ENCODE measurements at regions of chr18 and their contacts with region 1.

Region 1: GRCh38 chr18:74242438-74243096 is 49.2 kb downstream of the CYB5A start:
- DNase-seq: peak; percentile 25 to 40
- H3K4me3 ChIP-seq: peak overlapping the region; percentile 23
- H3K4me3 Mint-ChIP-seq: peak overlapping the region; percentile 60
- H3K27ac Mint-ChIP-seq: no peak overlapping the region
- H3K4me1 ChIP-seq: peaks cover 11% of the 10 kb centered on the region; the same call in 1 of the 2 replicates
- H3K4me1 Mint-ChIP-seq: peaks cover 9% of the 10 kb centered on the region
- H3K27me3 ChIP-seq: no peaks in the 10 kb centered on the region
- H3K27me3 Mint-ChIP-seq: no peaks in the 10 kb centered on the region
- CTCF ChIP-seq: no peak

Region 2: GRCh38 chr18:74190086-74190485 is 52.5 kb before region 1 on chr18:
- CTCF ChIA-PET with region 1: no interaction called
- POLR2A ChIA-PET with region 1: no interaction called
- intact Hi-C with region 1: no loop called
- DNase-seq: no peak
- H3K4me3 ChIP-seq: no peak overlapping the region
- H3K4me3 Mint-ChIP-seq: no peak overlapping the region
- H3K27ac Mint-ChIP-seq: no peak overlapping the region
- H3K4me1 ChIP-seq: no peaks in the 10 kb centered on the region
- H3K4me1 Mint-ChIP-seq: peaks cover 9% of the 10 kb centered on the region
- H3K27me3 ChIP-seq: no peaks in the 10 kb centered on the region
- H3K27me3 Mint-ChIP-seq: no peaks in the 10 kb centered on the region
- CTCF ChIP-seq: no peak

Region 3: DNA sequence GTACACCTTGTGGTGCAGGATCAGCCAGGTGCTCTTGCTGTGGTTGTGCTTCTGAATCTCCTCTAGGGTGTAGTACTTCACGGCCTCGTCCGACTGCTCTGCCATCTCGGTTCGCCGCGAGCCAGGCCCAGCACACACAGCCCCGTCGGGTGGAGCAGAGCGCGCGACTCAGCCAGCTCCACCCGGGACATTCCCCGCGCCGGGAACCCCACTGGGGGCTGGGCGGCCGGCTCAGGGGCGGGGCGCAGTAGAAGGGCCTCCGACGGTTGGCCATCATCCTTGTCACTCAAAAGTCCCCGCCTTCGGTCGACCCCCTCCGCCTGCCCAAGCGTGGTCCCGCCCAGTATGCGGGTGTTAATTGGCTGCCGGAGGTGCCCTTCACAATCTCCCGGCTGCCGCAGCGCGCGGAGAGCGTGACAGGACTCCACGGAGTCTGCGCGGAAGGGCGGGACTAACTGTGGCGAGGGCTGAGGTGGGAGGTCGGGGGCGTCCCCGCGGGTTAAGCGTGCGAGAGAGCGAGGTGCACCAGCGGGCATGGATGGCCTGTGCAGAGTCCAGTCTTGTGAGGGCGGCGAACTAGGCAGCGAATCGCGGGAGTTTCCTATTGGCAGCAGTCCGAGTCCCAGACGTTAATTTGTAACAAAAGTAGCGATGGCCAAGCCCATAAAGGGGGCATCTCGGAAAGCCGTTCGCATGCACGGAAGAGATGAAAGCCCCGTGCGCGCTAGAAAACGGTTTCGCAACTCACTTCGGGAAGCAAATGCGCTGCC is 49.4 kb after region 1 on chr18 and contains the start of gene CYB5A:
- CTCF ChIA-PET with region 1: no interaction called
- POLR2A ChIA-PET with region 1: no interaction called
- intact Hi-C with region 1: loop called (anchors 1 kb)
- DNase-seq: peak; percentile 94 to 95
- H3K4me3 ChIP-seq: peak within 1 kb of the TSS; percentile 58
- H3K4me3 Mint-ChIP-seq: peak within 1 kb of the TSS; percentile 78
- H3K27ac Mint-ChIP-seq: peak within 1 kb of the TSS; percentile 54
- H3K4me1 ChIP-seq: 0 out of 2 replicates have a peak, but pooled peaks cover 5% of the 10 kb centered on the region
- H3K4me1 Mint-ChIP-seq: peaks cover 10% of the 10 kb centered on the region
- H3K27me3 ChIP-seq: no peaks in the 10 kb centered on the region
- H3K27me3 Mint-ChIP-seq: no peaks in the 10 kb centered on the region
- CTCF ChIP-seq: no peak
- total RNA-seq, gene CYB5A: 103 and 105 TPM in 2 replicates

Region 4: DNA sequence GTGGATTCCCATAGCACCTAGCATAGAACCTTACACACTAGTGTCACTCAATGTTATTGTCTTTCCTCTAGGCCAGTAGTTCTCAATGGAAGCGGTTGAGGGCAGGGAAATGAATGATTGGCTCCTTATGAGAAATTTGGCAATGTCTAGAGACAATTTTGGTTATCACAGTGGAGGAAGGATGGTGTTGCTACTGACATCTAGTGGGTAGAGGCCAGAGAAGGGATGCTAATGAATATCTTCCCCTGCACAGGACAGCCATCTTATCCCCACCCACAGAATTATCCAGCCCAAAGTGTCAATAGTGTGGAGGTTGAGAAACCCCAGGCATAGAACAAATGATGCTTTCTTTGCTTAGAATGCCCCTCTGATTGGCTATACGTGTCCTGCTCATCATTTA is 88.8 kb after region 1 on chr18:
- CTCF ChIA-PET with region 1: no interaction called
- POLR2A ChIA-PET with region 1: no interaction called
- intact Hi-C with region 1: loop called (anchors 1 kb)
- DNase-seq: peak in 1 of 2 experiments; percentile 19
- H3K4me3 ChIP-seq: no peak overlapping the region
- H3K4me3 Mint-ChIP-seq: no peak overlapping the region
- H3K27ac Mint-ChIP-seq: no peak overlapping the region
- H3K4me1 ChIP-seq: peaks cover 25% of the 10 kb centered on the region
- H3K4me1 Mint-ChIP-seq: peaks cover 17% of the 10 kb centered on the region
- H3K27me3 ChIP-seq: no peaks in the 10 kb centered on the region
- H3K27me3 Mint-ChIP-seq: no peaks in the 10 kb centered on the region
- CTCF ChIP-seq: peak; percentile 18 to 19

Region 5: GRCh38 chr18:74342416-74343043 is 100.0 kb after region 1 on chr18:
- CTCF ChIA-PET with region 1: interaction called, 5 read pairs
- POLR2A ChIA-PET with region 1: no interaction called
- intact Hi-C with region 1: loop called (anchors 1 kb)
- DNase-seq: peak in 1 of 2 experiments; percentile 26
- H3K4me3 ChIP-seq: no peak overlapping the region
- H3K4me3 Mint-ChIP-seq: no peak overlapping the region
- H3K27ac Mint-ChIP-seq: no peak overlapping the region
- H3K4me1 ChIP-seq: no peaks in the 10 kb centered on the region
- H3K4me1 Mint-ChIP-seq: peaks cover 3% of the 10 kb centered on the region
- H3K27me3 ChIP-seq: no peaks in the 10 kb centered on the region
- H3K27me3 Mint-ChIP-seq: no peaks in the 10 kb centered on the region
- CTCF ChIP-seq: peak; percentile 24 to 40